ENCODE measurements at regions of chr1 and their contacts with region 1.

Region 1: DNA sequence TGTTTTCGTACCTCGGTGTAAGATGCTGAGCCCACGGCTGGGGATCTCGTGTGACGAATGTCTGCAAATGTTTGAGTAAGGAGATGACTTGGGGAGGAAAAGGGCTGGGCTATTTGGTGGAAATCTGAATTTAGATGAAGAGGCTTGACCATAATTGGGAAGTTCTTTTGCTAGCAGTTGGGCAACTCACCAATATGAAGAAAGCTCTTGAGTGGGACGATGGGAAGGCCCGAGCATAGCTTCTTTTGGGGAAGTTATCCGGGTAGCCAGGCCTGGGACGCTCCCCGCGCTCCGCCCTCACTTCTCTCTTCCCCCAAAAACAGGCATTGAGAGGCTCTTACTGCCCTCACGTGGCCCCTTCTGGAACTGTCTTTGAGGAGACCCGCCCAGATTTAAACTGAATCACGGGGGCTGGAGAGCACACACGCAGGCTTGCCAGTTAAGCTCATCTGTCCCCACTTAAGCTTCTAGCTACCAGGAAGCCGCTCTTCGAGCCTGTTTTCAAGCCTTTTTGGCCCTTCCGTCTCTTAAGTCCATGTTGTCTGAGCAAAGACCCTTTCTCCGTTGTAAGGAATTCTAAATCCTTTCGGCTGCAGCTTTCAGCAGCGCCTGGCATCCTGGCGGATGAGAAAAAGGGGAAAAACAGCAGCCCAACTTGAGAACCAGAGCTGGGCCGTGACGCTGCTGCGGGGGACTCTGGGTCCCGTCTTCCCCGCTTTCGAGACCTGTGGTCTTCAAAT is 93.1 kb downstream of the NID1 start:
- DNase-seq: peak; percentile 95
- ATAC-seq: peak; percentile 99
- H3K4me3 Mint-ChIP-seq: peak overlapping the region; percentile 70
- H3K27ac Mint-ChIP-seq: peak overlapping the region; percentile 94
- H3K4me1 Mint-ChIP-seq: peaks cover 16% of the 10 kb centered on the region
- H3K27me3 Mint-ChIP-seq: no peaks in the 10 kb centered on the region
- CTCF ChIP-seq: peak; percentile 83

Region 2: DNA sequence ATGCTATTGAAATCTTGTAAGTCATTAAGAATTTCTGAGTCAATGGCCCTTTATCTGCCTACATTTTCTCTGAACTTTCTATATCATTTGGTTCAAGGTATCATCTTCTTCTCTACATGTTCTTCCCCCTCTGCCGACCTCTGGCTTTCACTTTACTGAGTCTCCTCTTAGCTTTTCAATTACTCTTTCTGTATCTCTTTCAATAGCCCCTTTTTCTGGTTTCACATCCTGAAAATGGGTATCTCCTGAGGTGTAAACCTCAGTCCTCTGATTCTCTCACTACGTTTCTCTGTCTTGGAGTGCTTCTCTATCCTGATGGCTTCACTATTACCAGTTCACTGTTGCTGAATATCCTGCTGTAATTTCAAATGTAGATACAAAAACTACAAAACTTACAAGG is 203.9 kb before region 1 on chr1:
- CTCF ChIA-PET with region 1: interaction called, 5 read pairs
- POLR2A ChIA-PET with region 1: no interaction called
- intact Hi-C with region 1: loop called (anchors 10 kb)
- DNase-seq: peak; percentile 15
- ATAC-seq: peak; percentile 49
- H3K4me3 Mint-ChIP-seq: no peak overlapping the region
- H3K27ac Mint-ChIP-seq: peak overlapping the region; percentile 18
- H3K4me1 Mint-ChIP-seq: peaks cover 12% of the 10 kb centered on the region
- H3K27me3 Mint-ChIP-seq: no peaks in the 10 kb centered on the region
- CTCF ChIP-seq: no peak

Region 3: GRCh38 chr1:235838021-235838420 is 133.7 kb before region 1 on chr1:
- CTCF ChIA-PET with region 1: interaction called, 76 read pairs
- POLR2A ChIA-PET with region 1: interaction called, 5 read pairs
- intact Hi-C with region 1: no loop called
- DNase-seq: peak; percentile 45
- ATAC-seq: peak; percentile 82
- H3K4me3 Mint-ChIP-seq: no peak overlapping the region
- H3K27ac Mint-ChIP-seq: no peak overlapping the region
- H3K4me1 Mint-ChIP-seq: peaks cover 38% of the 10 kb centered on the region
- H3K27me3 Mint-ChIP-seq: no peaks in the 10 kb centered on the region
- CTCF ChIP-seq: no peak

Region 4: GRCh38 chr1:235878082-235878811 is 93.5 kb before region 1 on chr1:
- CTCF ChIA-PET with region 1: interaction called, 30 read pairs
- POLR2A ChIA-PET with region 1: interaction called, 3 read pairs
- intact Hi-C with region 1: no loop called
- DNase-seq: no peak
- ATAC-seq: no peak
- H3K4me3 Mint-ChIP-seq: no peak overlapping the region
- H3K27ac Mint-ChIP-seq: peak overlapping the region; percentile 91
- H3K4me1 Mint-ChIP-seq: peaks cover 77% of the 10 kb centered on the region
- H3K27me3 Mint-ChIP-seq: no peaks in the 10 kb centered on the region
- CTCF ChIP-seq: no peak

Region 5: GRCh38 chr1:235938709-235939479 is 32.8 kb before region 1 on chr1:
- CTCF ChIA-PET with region 1: interaction called, 29 read pairs
- POLR2A ChIA-PET with region 1: interaction called, 3 read pairs
- intact Hi-C with region 1: no loop called
- DNase-seq: no peak
- ATAC-seq: no peak
- H3K4me3 Mint-ChIP-seq: no peak overlapping the region
- H3K27ac Mint-ChIP-seq: peak overlapping the region; percentile 68
- H3K4me1 Mint-ChIP-seq: peaks cover 37% of the 10 kb centered on the region
- H3K27me3 Mint-ChIP-seq: no peaks in the 10 kb centered on the region
- CTCF ChIP-seq: no peak

Region 6: GRCh38 chr1:235999259-235999925 is 27.7 kb after region 1 on chr1:
- CTCF ChIA-PET with region 1: interaction called, 22 read pairs
- POLR2A ChIA-PET with region 1: interaction called, 5 read pairs
- intact Hi-C with region 1: no loop called
- DNase-seq: peak; percentile 80
- ATAC-seq: peak; percentile 90
- H3K4me3 Mint-ChIP-seq: peak overlapping the region; percentile 48
- H3K27ac Mint-ChIP-seq: peak overlapping the region; percentile 97
- H3K4me1 Mint-ChIP-seq: peaks cover 45% of the 10 kb centered on the region
- H3K27me3 Mint-ChIP-seq: peaks cover 2% of the 10 kb centered on the region
- CTCF ChIP-seq: no peak